MCF 10A (cell line): ENCODE measurements at regions of chr1 and their contacts with region 1.

Region 1: DNA sequence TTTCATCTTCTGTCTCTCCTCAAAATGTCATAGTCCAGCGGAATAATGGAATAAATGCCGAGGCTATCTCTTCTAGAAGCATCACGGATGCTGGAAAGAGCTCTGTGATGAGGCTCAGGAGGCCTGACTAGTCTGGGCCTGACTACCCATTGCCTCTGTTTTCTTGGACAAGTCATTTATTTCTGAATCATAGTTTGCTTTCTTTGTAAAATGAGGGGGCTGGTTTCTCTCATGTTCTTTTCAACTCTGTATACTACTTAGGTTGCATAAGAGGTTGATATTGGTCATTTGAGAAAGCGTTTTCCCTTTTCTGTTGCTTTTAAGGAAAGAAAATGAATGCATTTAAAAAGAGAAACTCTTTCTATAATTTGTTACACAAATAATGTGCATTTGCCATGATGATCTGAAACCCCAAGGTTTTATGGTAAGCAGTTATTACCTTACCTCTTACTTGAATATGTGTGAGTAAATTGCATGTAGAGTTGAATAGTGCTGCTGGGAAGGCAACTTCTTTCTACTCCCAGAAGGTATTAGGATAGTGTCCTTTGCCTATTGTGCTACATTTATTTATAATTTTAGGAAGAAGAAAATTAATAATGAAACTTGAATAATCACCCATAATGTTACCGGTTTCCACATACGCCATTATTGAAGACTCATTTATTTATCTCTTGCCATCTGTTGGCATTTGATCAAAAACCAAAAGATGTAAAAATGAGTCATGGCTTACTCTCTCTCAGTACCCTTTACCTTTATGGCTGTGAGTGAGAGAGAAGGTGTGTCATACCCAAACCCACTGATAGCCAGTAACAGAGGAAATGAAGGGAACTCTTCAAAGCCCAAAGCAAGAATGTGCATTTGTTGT is 179.1 kb downstream of the FASLG start:
- DNase-seq: peak; percentile 90
- H3K4me3 Mint-ChIP-seq: no peak overlapping the region
- H3K27ac Mint-ChIP-seq: no peak overlapping the region
- H3K4me1 Mint-ChIP-seq: peaks cover 16% of the 10 kb centered on the region
- H3K27me3 Mint-ChIP-seq: no peaks in the 10 kb centered on the region
- CTCF ChIP-seq: no peak

Region 2: GRCh38 chr1:172781513-172782140 is 56.4 kb before region 1 on chr1:
- CTCF ChIA-PET with region 1: no interaction called
- POLR2A ChIA-PET with region 1: no interaction called
- intact Hi-C with region 1: no loop called
- DNase-seq: no peak
- H3K4me3 Mint-ChIP-seq: no peak overlapping the region
- H3K27ac Mint-ChIP-seq: no peak overlapping the region
- H3K4me1 Mint-ChIP-seq: no peaks in the 10 kb centered on the region
- H3K27me3 Mint-ChIP-seq: no peaks in the 10 kb centered on the region
- CTCF ChIP-seq: no peak

Region 3: DNA sequence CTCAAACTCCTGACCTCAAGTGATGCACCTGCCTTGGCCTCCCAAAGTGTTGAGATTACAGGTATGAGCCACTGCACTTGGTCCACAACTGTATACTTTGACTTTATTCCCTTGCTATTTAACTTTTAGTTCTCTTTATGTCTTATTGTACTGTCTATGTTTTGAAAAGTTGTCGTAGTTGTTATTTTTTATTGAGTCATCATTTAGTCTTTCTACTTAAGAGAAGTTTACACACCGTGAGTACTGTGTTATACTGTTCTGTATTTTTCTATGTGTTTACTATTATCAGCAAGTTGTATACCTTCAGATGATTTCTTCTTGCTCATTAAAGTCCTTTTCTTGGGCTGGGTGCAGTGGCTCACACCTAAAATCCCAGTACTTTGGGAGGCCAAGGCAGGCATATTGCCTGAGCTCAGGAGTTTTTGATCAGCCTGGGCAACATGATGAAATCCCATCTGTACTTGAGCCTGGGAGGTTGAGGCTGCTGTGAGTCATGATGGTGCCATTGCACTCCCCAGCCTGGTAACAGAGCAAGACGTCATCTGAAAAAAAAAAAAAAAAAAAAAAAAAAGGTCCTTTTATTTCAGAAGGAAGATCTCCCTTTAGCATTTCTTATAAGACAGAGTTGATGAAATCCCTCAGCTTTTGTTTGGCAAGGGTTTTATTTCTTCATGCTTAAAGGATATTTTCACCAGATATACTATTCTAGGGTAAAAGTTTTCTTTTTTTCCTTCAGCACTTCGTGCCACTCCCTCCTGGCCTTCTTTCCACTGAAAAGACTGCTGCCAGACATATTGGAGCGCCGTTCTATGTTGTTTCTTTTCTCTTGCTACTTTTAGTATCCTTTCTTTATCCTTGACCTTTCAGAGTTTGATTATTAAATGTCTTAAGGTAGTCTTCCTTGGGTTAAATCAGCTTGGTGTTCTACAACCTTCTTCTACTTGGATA is 165.1 kb after region 1 on chr1:
- CTCF ChIA-PET with region 1: interaction called, 3 read pairs
- POLR2A ChIA-PET with region 1: no interaction called
- intact Hi-C with region 1: loop called (anchors 1 kb)
- DNase-seq: peak; percentile 95
- H3K4me3 Mint-ChIP-seq: no peak overlapping the region
- H3K27ac Mint-ChIP-seq: peak overlapping the region; percentile 36
- H3K4me1 Mint-ChIP-seq: peaks cover 16% of the 10 kb centered on the region
- H3K27me3 Mint-ChIP-seq: no peaks in the 10 kb centered on the region
- CTCF ChIP-seq: no peak

Region 4: GRCh38 chr1:173038875-173039554 is 201.0 kb after region 1 on chr1:
- CTCF ChIA-PET with region 1: no interaction called
- POLR2A ChIA-PET with region 1: no interaction called
- intact Hi-C with region 1: no loop called
- DNase-seq: no peak
- H3K4me3 Mint-ChIP-seq: no peak overlapping the region
- H3K27ac Mint-ChIP-seq: no peak overlapping the region
- H3K4me1 Mint-ChIP-seq: peaks cover 9% of the 10 kb centered on the region
- H3K27me3 Mint-ChIP-seq: no peaks in the 10 kb centered on the region
- CTCF ChIP-seq: no peak